A673 (cell line): ENCODE measurements at regions of chr11 and their contacts with region 1.

Region 1: GRCh38 chr11:69770525-69770924 is 4.6 kb downstream of the FGF4 start:
- DNase-seq: peak; percentile 28
- H3K4me3 ChIP-seq: no peak overlapping the region
- H3K27ac ChIP-seq: no peak overlapping the region
- H3K4me1 ChIP-seq: no peaks in the 10 kb centered on the region
- H3K27me3 ChIP-seq: peaks cover 64% of the 10 kb centered on the region
- CTCF ChIP-seq: no peak

Region 2: DNA sequence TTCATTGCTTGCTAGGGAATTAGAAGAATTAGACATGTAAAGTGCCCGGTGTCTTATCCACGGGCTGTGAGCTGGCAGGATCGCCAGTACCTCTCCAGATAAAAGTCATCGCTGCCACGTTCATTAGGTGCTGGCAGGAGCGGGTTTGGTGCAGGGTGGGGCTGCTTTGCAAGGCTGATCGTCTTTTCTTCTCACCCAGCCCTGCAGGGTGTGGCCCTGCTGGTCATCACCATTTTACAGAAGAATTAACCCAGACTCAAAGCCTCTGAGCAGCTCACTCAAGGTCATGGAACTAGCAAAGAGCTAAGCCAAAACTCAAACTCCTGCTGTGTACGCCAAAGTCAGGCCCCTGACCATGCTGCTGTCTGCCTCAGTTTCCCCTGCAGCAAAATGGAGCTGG is 10.7 kb after region 1 on chr11:
- CTCF ChIA-PET with region 1: no interaction called
- POLR2A ChIA-PET with region 1: no interaction called
- intact Hi-C with region 1: no loop called
- DNase-seq: no peak
- H3K4me3 ChIP-seq: no peak overlapping the region
- H3K27ac ChIP-seq: no peak overlapping the region
- H3K4me1 ChIP-seq: no peaks in the 10 kb centered on the region
- H3K27me3 ChIP-seq: peaks cover 21% of the 10 kb centered on the region
- CTCF ChIP-seq: no peak

Region 3: DNA sequence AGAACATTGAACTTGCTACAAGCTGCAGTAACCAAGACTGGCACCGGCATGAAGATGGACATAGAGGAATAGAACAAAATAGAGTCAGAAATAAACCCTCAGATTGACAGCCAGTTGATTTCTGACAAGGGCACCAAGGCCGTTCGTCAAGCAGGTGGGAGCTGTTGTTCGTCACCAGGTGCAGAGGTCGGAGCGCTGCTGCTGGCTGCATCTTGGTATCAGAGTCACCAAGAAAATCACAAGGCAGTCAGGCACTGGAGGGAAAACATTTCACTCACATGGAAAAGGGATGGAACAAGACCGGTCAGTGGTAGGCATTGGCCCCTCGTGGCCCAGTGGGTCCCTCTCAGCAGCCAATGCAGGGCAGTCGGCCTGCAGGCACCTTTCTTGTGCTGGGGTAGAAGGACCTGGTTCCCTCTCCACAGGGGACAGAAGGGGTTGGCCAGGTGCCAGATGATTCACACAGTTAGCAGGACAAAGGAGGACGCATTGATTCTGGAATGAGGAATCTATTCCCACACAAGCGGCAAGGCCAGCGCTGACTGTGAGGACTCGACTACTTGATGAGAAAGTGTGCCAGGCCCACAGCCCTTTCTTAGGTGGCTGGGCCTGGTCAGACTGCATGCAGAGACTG is 164.5 kb after region 1 on chr11:
- CTCF ChIA-PET with region 1: no interaction called
- POLR2A ChIA-PET with region 1: interaction called, 16 read pairs
- intact Hi-C with region 1: no loop called
- DNase-seq: peak; percentile 65
- H3K4me3 ChIP-seq: no peak overlapping the region
- H3K27ac ChIP-seq: no peak overlapping the region
- H3K4me1 ChIP-seq: no peaks in the 10 kb centered on the region
- H3K27me3 ChIP-seq: no peaks in the 10 kb centered on the region
- CTCF ChIP-seq: no peak